ENCODE measurements at regions of chr2 and their contacts with region 1.

Region 1: DNA sequence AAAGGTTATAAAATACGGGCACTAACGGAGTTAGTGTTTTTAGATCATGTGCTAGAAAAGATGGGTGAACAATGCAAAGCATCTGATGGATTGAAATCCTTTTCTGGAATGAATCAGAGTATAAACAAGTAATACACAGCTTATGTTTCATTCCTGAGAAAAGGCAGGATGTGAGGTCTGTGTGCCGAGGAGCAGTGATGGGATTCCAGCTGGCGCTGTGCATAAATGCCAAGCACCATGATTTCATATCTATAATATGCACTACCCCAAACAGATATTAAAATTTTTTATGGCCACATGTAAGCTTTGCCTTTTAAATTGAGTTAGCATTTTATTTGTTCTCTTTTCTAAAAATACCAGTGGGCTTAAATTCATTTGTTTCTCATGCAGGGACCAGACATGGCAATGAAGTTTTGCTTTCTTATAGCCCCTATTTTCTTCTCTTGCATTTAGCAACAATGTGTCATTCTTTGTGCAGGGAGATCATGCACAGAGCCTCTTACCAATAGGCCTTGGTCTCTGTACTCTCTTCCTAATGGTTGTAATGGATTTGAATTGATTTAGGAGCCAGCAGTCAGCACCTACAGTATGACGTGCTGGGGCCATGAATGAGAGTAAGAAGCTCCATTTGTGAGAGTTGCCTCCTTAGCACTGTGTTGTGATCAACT is 323.9 kb downstream of the SLC8A1 start:
- DNase-seq: no peak

Region 2: GRCh38 chr2:39017334-39017733 is 1110.7 kb before region 1 on chr2:
- intact Hi-C with region 1: no loop called
- DNase-seq: no peak

Region 3: DNA sequence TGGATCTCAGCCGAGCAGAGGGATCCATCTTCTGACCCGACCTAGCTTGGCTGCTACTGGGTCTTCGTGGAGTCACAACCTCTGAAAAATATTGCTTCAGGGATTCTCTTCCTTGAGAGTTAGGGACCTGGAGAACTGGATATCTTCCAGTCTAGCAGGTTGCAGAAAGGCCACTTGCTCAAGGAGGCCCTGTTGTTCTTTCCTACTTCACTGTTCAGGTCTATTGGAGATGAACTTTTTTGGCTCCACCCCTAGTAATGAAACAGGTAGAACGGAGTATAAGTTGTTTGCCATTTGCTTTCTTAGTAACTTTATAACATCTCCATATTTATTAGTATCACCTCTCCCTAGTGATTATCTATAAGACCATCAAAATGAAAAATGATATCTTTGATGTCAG is 244.7 kb before region 1 on chr2:
- intact Hi-C with region 1: no loop called
- DNase-seq: no peak

Region 4: DNA sequence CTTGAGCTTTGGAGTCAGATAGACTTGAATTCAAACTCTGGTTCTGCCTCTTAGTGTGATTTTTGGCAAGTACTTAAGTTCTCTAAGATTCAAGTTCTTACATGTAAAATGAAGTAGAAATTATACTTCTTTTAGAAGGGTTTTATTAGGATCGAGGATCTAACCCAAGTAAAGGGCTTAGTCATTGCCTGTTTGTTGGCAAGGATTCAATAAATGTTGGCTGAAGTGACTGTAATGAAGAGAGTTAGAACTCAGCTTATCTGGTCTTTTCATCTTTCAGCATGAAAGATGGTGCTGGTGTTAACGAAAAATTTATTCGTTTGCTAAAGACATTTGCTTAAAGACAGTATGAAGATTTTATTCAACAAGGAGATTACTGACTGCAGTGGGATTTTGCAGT is 33.0 kb before region 1 on chr2:
- intact Hi-C with region 1: loop called (anchors 5 kb)
- DNase-seq: no peak

Measured in cardiac septum (tissue), 1 donor.